Endothelial cell of umbilical vein (primary cell): ENCODE measurements at regions of chr18 and their contacts with region 1.

Region 1: DNA sequence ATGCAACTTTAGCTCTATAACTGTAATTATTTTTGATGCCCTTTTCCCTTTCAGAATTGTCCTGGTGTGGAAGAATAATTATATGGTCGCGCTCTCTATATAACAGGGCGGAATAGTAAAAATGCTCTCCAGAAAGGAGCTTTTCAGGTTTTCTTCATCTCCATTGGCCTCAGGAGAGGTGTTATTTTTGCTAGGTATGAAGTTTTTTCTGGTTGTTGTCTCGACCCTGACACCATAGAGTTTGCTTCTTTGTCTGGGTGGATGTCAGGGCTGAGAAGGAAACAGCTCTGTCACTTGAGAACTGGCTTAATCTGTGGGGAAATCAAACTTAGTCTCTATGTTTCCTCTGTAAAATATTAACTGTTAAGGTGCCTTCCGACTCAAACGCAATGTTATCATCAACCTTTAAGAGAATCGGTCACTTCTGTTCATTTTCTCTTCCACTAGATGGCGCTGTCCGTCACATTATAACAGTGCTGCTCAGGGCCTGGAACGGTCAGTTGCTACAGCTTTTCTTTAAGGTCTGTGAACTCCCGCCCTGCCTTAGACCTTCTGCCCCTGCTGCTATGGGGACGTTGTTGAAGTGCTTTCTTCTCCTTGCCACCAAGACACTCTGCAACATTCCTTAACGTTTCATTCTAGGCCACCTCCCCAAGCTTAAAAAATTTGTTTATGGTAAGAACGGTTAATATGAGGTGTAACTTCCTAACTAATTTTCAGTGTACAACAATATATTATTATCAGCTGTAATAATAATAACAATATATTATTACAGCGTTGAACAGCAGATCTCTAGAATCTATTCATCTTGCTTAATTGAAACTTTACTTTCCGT is 23.8 kb upstream of the SERPINB12 start:
- DNase-seq: peak; percentile 59
- H3K4me3 ChIP-seq: no peak overlapping the region
- H3K27ac ChIP-seq: no peak overlapping the region
- H3K4me1 ChIP-seq: no peaks in the 10 kb centered on the region
- H3K27me3 ChIP-seq: peaks cover 9 to 20% of the 10 kb centered on the region in 2 experiments
- CTCF ChIP-seq: peak; percentile 56 to 68
- POLR2A ChIP-seq: no peak

Region 2: GRCh38 chr18:63120620-63121019 is 397.8 kb before region 1 on chr18:
- CTCF ChIA-PET with region 1: no interaction called
- POLR2A ChIA-PET with region 1: no interaction called
- dilution Hi-C with region 1: no loop called
- intact Hi-C with region 1: no loop called
- DNase-seq: no peak
- H3K4me3 ChIP-seq: no peak overlapping the region
- H3K27ac ChIP-seq: no peak overlapping the region
- H3K4me1 ChIP-seq: no peaks in the 10 kb centered on the region
- H3K27me3 ChIP-seq: peaks cover 7 to 47% of the 10 kb centered on the region in 2 experiments
- CTCF ChIP-seq: no peak
- POLR2A ChIP-seq: no peak

Region 3: GRCh38 chr18:63367053-63367953 is 151.1 kb before region 1 on chr18 and contains the start of gene KDSR:
- CTCF ChIA-PET with region 1: no interaction called
- POLR2A ChIA-PET with region 1: no interaction called
- dilution Hi-C with region 1: no loop called
- intact Hi-C with region 1: no loop called
- DNase-seq: peak; percentile 98
- H3K4me3 ChIP-seq: peak within 1 kb of the TSS; percentile 85 to 95 (median 94)
- H3K27ac ChIP-seq: peak within 1 kb of the TSS; percentile 89
- H3K4me1 ChIP-seq: peaks cover 12% of the 10 kb centered on the region
- H3K27me3 ChIP-seq: no peaks in the 10 kb centered on the region
- CTCF ChIP-seq: no peak
- POLR2A ChIP-seq: peak; percentile 92
- total RNA-seq, gene KDSR: 40.6 and 43.1 TPM in 2 replicates

Region 4: DNA sequence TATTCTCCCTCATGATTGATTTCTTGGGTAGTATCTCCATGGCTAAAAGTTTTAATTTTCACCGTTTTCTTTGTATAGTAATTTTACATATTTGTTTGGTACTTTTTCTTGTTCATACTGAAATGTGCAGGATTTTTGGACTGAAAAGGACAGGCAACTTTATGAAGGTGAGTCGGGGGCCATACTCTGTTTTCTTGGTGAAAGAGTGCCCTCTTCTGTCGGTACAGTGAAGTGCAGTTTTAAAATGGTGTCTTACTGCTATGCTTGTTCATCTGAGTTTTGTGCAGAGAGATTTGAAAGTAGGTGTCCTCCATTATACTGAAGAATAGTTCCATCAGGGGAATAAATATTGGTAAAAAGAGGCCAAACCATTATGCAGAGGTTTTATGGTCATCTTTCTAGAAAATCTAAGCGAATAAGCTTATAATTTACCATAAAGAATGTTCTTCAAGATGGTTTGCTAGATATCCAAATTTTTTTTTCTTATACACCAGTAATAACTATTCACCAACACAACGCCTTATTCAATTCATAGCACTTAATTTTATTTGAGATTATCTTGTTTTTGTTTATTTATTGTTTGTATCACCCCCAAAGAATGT is 60.1 kb after region 1 on chr18:
- CTCF ChIA-PET with region 1: interaction called, 78 read pairs
- POLR2A ChIA-PET with region 1: no interaction called
- dilution Hi-C with region 1: no loop called
- intact Hi-C with region 1: loop called (anchors 1 kb)
- DNase-seq: peak; percentile 53
- H3K4me3 ChIP-seq: no peak overlapping the region
- H3K27ac ChIP-seq: no peak overlapping the region
- H3K4me1 ChIP-seq: no peaks in the 10 kb centered on the region
- H3K27me3 ChIP-seq: no peaks in the 10 kb centered on the region
- CTCF ChIP-seq: peak; percentile 52 to 63
- POLR2A ChIP-seq: no peak

Region 5: GRCh38 chr18:63823518-63824219 is 305.3 kb after region 1 on chr18:
- CTCF ChIA-PET with region 1: interaction called, 12 read pairs
- POLR2A ChIA-PET with region 1: no interaction called
- dilution Hi-C with region 1: no loop called
- intact Hi-C with region 1: no loop called
- DNase-seq: peak; percentile 12
- H3K4me3 ChIP-seq: no peak overlapping the region
- H3K27ac ChIP-seq: no peak overlapping the region
- H3K4me1 ChIP-seq: no peaks in the 10 kb centered on the region
- H3K27me3 ChIP-seq: peaks cover 2 to 10% of the 10 kb centered on the region in 2 experiments
- CTCF ChIP-seq: peak; percentile 29 to 34
- POLR2A ChIP-seq: no peak

Region 6: GRCh38 chr18:63963615-63964256 is 445.3 kb after region 1 on chr18:
- CTCF ChIA-PET with region 1: interaction called, 11 read pairs
- POLR2A ChIA-PET with region 1: no interaction called
- dilution Hi-C with region 1: no loop called
- intact Hi-C with region 1: no loop called
- DNase-seq: peak; percentile 57
- H3K4me3 ChIP-seq: no peak overlapping the region
- H3K27ac ChIP-seq: no peak overlapping the region
- H3K4me1 ChIP-seq: no peaks in the 10 kb centered on the region
- H3K27me3 ChIP-seq: peaks cover 14 to 28% of the 10 kb centered on the region in 2 experiments
- CTCF ChIP-seq: peak; percentile 68 to 82
- POLR2A ChIP-seq: no peak

Region 7: DNA sequence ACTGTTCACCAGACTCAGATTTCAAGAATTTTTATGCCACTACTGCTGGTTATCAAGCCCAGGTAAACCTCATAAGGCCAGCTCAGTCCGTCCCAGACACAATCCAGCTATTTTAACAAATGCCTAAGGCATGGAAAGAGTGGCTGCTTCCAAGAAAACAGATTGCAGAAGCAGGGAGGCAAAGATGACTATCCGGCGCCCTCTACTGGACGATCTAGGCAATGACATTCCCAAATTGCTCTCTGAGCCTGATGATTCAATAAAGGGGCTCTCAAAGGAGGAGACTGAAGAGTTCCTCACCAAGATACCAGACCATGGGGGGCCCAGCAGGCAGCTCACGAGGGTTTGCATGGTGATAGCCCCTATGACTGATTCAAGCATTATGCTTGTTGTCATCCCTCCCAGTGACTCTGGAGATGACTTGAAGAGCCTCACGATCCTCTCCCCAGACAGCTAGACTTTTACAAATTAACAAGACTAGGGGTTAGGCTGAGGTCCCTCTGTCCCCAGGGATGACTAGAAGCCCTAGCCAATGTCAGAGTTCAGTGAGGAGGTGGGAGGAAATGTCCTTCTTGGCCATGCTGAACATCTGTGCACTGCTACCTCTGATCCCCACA is 476.5 kb after region 1 on chr18:
- CTCF ChIA-PET with region 1: interaction called, 19 read pairs
- POLR2A ChIA-PET with region 1: no interaction called
- dilution Hi-C with region 1: no loop called
- intact Hi-C with region 1: loop called (anchors 5 kb)
- DNase-seq: peak; percentile 51
- H3K4me3 ChIP-seq: no peak overlapping the region
- H3K27ac ChIP-seq: no peak overlapping the region
- H3K4me1 ChIP-seq: no peaks in the 10 kb centered on the region
- H3K27me3 ChIP-seq: no peaks in the 10 kb centered on the region
- CTCF ChIP-seq: peak; percentile 83 to 90
- POLR2A ChIP-seq: no peak